Panc1 (cell line): ENCODE measurements at regions of chr10 and their contacts with region 1.

Region 1: GRCh38 chr10:73591935-73592699 is 975 bp upstream of the USP54 start:
- DNase-seq: peak; percentile 83
- ATAC-seq: peak; percentile 91
- H3K4me3 ChIP-seq: peak overlapping the region in 1 of 2 experiments; percentile 37; a peak in 2 of 4 replicates
- H3K27ac ChIP-seq: peak overlapping the region; percentile 84
- H3K4me1 ChIP-seq: peaks cover 35% of the 10 kb centered on the region
- H3K27me3 ChIP-seq: no peaks in the 10 kb centered on the region
- CTCF ChIP-seq: no peak

Region 2: DNA sequence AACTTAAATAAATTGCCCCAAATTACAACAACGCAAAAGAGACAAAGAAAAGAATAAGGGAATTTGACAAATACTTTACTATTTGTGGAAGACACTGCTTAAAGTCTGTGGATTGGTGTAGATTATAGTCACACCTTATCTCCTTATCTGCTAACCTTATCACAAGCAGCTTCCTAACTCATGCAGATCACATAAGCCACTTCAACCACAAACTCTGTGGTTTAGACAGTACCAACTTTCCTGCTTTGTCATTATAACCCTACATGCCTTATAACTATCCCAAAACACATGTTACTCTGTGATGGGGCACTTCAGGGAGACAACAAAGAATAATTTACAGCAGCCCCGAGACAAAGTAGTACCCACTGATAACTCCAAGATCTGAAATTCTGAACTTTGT is 54.8 kb before region 1 on chr10:
- CTCF ChIA-PET with region 1: no interaction called
- POLR2A ChIA-PET with region 1: interaction called, 13 read pairs
- in situ Hi-C with region 1: no loop called
- intact Hi-C with region 1: no loop called
- DNase-seq: no peak
- ATAC-seq: no peak
- H3K4me3 ChIP-seq: no peak overlapping the region
- H3K27ac ChIP-seq: no peak overlapping the region
- H3K4me1 ChIP-seq: no peaks in the 10 kb centered on the region
- H3K27me3 ChIP-seq: no peaks in the 10 kb centered on the region
- CTCF ChIP-seq: no peak

Region 3: GRCh38 chr10:73609116-73609515 is 17.0 kb after region 1 on chr10:
- CTCF ChIA-PET with region 1: no interaction called
- POLR2A ChIA-PET with region 1: interaction called, 10 read pairs
- in situ Hi-C with region 1: no loop called
- intact Hi-C with region 1: no loop called
- DNase-seq: no peak
- ATAC-seq: no peak
- H3K4me3 ChIP-seq: no peak overlapping the region
- H3K27ac ChIP-seq: no peak overlapping the region
- H3K4me1 ChIP-seq: no peaks in the 10 kb centered on the region
- H3K27me3 ChIP-seq: no peaks in the 10 kb centered on the region
- CTCF ChIP-seq: no peak

Region 4: DNA sequence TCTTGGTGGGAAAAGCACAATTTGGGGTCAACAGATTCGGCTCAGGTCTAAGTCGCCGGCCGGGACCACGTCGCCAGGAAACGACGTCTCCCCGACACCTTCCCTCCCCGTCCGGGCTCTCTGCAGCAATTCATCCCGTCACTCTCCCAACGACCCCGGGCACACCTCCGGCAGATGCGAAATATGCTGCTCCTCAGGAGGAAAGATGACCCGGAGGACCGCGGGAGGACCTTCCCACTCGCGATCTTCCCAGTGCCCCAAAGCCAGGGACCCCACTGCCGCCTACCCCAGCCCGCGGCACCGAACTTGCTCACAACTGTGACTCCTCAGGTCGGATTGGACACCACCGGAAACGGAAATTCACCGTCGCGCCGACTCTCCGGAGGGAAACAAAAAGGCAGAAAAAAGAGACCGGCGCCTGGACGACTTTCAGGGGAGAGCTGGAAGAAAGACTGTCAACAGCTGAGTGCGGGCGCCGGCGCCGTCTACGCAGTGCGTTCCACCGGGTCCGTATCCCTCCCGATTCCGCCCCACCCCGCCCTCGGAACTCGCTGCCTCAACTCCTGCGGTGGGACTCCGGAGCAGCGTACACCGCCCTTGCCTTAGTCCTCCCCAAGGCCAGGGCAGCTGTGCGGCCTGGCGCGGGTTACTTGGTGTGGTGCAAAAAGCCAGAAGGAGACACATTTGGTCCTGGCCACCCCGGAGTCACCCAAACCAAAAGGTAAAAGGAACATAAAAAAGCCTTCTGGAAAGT is 138.2 kb after region 1 on chr10:
- CTCF ChIA-PET with region 1: no interaction called
- POLR2A ChIA-PET with region 1: no interaction called
- in situ Hi-C with region 1: no loop called
- intact Hi-C with region 1: no loop called
- DNase-seq: peak; percentile 90
- ATAC-seq: peak; percentile 97
- H3K4me3 ChIP-seq: peak overlapping the region; percentile 94 to 96
- H3K27ac ChIP-seq: peak overlapping the region; percentile 97
- H3K4me1 ChIP-seq: no peaks in the 10 kb centered on the region; the same call in 1 of the 2 replicates
- H3K27me3 ChIP-seq: no peaks in the 10 kb centered on the region
- CTCF ChIP-seq: no peak

Region 5: DNA sequence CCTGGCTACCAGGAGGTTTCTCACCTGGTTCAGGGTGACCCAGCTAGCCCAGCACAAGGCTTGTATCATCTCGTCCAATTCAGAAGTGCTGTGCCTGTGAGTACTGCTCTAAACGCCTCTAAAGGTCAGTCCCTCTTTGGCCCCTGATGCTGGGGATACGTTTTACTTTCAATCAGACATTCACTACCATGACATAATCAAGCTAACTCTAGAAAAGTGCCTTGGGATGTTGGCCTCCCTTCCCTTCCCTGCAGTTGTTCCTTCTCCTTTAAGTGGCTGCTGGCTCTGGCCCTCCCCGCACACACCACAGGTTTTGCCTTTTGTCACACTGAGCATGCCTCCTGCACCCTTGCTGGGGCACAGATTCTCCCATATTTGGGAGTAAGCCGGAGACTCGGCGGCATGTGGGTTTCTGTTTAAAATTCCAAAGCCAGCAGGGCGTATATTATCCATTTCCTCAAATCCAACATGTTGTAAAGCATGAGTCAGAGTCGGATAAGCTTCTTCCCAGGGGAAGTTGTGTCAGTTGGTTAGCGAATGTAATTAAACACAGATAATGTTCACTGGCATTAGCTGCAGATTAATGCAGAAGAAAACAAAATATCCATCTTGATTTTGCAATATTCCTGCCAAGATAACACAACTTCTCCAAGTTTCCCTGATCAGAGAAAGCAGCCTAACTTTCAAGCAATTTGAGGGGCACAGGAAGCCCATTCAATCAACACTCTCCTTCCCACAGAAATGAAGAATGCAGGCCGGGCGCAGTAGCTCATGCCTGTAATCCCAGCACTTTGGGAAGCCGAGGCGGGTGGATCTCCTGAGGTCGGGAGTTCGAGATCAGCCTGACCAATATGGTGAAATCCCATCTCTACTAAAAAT is 374.0 kb after region 1 on chr10:
- CTCF ChIA-PET with region 1: no interaction called
- POLR2A ChIA-PET with region 1: no interaction called
- in situ Hi-C with region 1: no loop called
- intact Hi-C with region 1: no loop called
- DNase-seq: peak; percentile 97
- ATAC-seq: peak; percentile 96
- H3K4me3 ChIP-seq: peak overlapping the region; percentile 10 to 47; a peak in 3 of 4 replicates
- H3K27ac ChIP-seq: peak overlapping the region; percentile 99
- H3K4me1 ChIP-seq: peaks cover 57% of the 10 kb centered on the region
- H3K27me3 ChIP-seq: no peaks in the 10 kb centered on the region
- CTCF ChIP-seq: no peak

Region 6: GRCh38 chr10:74690393-74690792 is 1098.3 kb after region 1 on chr10:
- CTCF ChIA-PET with region 1: interaction called, 12 read pairs
- POLR2A ChIA-PET with region 1: no interaction called
- in situ Hi-C with region 1: no loop called
- intact Hi-C with region 1: no loop called
- DNase-seq: no peak
- ATAC-seq: no peak
- H3K4me3 ChIP-seq: no peak overlapping the region
- H3K27ac ChIP-seq: no peak overlapping the region
- H3K4me1 ChIP-seq: no peaks in the 10 kb centered on the region
- H3K27me3 ChIP-seq: no peaks in the 10 kb centered on the region
- CTCF ChIP-seq: no peak